Activated T-helper 2 cell treated with anti-CD3 and anti-CD28 coated beads, Interferon-gamma antibody, Interleukin-2, Interleukin-4, amounts not matched to agents 10 μg/mL and 5 μg/mL and 100 μg/mL, durations not matched to agents 14 hours and 24 hours and 36 hours (primary cell): ENCODE measurements at regions of chr1 and their contacts with region 1.

Region 1: DNA sequence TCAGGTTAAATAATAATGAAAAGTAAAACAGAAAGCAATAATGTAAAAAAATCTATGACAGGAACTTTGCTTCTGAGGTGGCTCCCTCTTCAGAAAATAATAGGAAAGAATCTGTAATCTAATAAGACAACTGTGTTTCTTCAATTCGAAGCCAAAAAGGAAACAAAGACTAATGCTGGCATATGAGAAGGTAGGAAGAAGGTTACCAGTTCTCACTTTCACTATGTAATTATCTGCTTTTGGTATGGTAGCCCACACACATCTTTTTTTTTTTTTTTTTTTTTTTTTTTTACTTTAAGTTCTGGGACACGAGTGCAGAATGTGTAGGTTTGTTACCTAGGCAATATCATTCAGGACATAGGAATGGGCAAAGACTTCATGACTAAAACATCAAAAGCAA is 47.1 kb downstream of the COP1 start:
- DNase-seq: no peak
- H3K4me3 Mint-ChIP-seq: peak overlapping the region; percentile 42
- H3K27ac Mint-ChIP-seq: peak overlapping the region; percentile 84
- H3K4me1 Mint-ChIP-seq: peaks cover 40% of the 10 kb centered on the region
- H3K27me3 Mint-ChIP-seq: no peaks in the 10 kb centered on the region

Region 2: DNA sequence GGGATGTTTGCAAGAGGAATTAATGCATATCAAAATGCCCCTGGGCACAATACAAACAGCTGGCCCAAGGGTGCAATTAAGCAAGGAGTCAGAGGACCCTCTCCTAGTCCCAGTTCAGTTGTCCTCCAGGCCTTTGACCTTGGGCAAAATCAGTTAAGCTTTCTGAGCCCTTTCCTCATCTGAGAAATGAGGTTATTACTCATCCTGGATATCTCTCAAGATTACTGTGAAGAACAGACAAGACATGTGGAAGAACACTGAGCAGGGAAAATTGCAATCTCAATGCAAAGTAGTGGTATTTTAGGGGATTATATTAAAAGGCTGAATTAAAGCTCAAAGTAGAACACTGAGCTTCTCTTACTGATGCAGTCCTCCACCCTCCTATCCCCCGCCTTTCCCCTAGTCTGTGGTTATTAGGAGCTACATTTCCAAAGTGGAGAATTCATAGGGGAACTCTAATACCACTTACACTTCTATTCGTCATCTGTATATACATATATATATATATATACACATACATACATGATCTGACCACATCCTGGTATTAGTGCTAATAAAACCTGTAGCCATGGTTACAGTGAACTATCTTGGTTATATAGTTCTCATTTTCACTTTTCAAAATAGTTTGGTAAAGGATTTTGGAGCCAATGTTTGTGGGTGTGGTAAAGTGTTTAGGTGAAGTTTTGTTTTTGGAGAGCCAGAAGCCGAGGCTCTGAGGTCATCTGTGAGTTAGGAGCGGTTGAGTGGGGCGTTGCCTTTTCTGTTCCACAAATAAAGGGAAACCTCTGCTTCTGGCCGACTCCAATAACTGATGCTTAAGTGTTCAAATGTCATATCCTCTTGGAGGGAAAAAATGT is 985.5 kb before region 1 on chr1:
- intact Hi-C with region 1: no loop called
- DNase-seq: no peak
- H3K4me3 Mint-ChIP-seq: no peak overlapping the region
- H3K27ac Mint-ChIP-seq: peak overlapping the region; percentile 13
- H3K4me1 Mint-ChIP-seq: peaks cover 45% of the 10 kb centered on the region
- H3K27me3 Mint-ChIP-seq: no peaks in the 10 kb centered on the region

Region 3: GRCh38 chr1:176119549-176119948 is 40.4 kb before region 1 on chr1:
- intact Hi-C with region 1: loop called (anchors 10 kb)
- DNase-seq: no peak
- H3K4me3 Mint-ChIP-seq: no peak overlapping the region
- H3K27ac Mint-ChIP-seq: no peak overlapping the region
- H3K4me1 Mint-ChIP-seq: no peaks in the 10 kb centered on the region
- H3K27me3 Mint-ChIP-seq: no peaks in the 10 kb centered on the region

Region 4: DNA sequence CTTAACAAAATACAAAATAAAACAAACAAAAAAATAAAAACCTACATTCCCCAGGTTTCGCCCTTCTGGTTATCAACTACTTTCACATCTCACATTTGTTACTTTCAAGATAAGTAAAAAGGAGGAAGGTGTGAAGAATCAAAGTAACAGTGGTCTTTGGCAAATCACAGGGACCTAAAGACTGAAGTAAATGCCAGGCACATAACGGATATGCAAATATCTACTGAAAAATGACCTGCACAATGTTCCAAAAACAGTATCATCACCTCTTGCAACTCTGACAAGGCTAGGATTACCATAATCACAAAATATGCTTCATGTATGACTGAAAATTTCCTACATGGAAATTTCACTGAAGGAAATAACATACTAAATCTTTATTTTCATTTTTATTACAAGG is 17.8 kb after region 1 on chr1:
- intact Hi-C with region 1: loop called (anchors 1 kb)
- DNase-seq: no peak
- H3K4me3 Mint-ChIP-seq: no peak overlapping the region
- H3K27ac Mint-ChIP-seq: peak overlapping the region; percentile 51
- H3K4me1 Mint-ChIP-seq: peaks cover 28% of the 10 kb centered on the region
- H3K27me3 Mint-ChIP-seq: no peaks in the 10 kb centered on the region

Region 5: DNA sequence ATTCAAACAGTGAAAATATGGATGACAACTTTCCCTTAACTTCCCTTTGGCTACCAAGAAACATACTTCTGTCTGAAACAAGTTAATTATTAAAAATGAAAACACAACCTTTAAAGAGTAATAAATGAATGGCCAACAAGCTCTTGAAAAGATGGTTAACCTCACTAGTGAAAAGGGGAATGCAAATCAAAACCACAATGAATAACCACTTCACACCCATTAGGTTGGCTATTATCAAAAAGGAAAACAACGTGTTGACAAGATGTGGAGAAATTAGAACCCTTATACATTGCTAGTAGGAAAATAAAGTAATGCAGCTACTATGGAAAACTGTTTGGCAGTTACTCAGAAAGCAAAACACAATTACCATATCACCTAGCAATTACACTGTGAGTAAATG is 33.0 kb after region 1 on chr1:
- intact Hi-C with region 1: loop called (anchors 1 kb)
- DNase-seq: no peak
- H3K4me3 Mint-ChIP-seq: no peak overlapping the region
- H3K27ac Mint-ChIP-seq: peak overlapping the region; percentile 35
- H3K4me1 Mint-ChIP-seq: peaks cover 40% of the 10 kb centered on the region
- H3K27me3 Mint-ChIP-seq: no peaks in the 10 kb centered on the region

Region 6: DNA sequence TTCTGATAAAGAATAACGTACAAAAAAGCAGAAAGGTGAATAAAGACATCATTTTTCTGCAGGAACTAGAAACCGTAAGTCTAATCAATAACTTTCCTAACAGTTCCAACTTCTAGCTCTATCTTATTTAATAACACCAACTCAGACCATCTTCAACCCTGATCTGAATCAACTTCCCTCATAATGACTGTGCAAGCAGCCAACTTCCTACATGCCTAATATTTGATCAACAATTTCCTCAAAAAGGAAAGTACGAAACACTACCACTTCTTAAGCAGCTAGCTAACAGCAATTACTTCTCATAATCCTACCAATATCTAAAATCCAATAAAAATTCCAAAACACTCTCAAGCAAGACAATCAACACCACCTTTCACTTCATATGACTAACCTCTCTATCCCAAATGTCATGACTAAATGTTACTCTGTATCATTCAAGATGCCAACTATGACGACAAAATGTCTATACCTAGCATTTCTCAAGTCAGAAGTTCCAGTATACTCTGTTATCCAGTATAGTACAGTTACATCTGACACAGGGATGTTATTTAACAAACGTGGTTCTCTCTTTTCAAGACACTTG is 45.4 kb after region 1 on chr1:
- intact Hi-C with region 1: loop called (anchors 1 kb)
- DNase-seq: no peak
- H3K4me3 Mint-ChIP-seq: peak overlapping the region; percentile 99
- H3K27ac Mint-ChIP-seq: peak overlapping the region; percentile 95
- H3K4me1 Mint-ChIP-seq: peaks cover 27% of the 10 kb centered on the region
- H3K27me3 Mint-ChIP-seq: no peaks in the 10 kb centered on the region